ENCODE measurements at regions of chr6 and their contacts with region 1.

Region 1: DNA sequence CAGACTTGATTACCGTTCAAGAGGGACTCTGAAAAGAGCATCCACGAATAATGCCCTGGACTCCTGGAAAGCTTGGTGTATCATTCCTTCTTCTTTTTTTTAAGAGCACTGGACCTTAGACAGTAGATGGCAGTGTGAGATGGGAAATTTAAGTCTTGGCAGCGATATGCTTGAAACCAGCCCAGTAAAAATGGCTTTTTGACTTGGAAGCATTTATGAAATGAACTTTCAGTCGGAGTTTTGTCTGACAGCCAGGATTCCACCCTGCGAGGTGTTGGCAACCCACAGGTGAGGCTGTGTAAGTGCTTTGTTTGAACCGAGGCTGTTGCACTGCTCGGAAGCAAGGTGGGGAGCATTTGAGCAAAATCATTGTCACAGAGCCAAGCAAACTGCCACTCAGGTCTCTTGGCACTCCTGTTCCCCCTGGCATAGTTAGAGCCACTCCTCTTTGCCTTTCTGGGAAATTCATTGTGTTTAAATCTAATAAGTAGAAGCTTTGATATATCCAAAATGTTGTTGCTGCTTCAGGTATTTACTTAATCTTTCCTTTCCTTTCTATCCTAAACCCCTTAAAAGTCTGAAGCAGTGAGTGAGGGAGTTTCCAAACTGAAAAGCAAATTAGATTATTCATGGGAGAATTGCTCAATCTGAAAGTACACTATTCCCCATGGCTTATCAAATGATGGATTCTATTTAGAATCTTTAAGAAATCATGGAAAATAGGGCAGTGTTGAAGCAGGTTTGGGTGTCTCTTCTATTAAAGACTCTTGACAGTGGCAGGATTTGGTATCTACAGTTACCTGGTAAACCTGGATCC is 272.8 kb upstream of the SLC35B3 start:
- DNase-seq: peak; percentile 13
- H3K4me3 Mint-ChIP-seq: peak overlapping the region; percentile 21
- H3K27ac Mint-ChIP-seq: no peak overlapping the region
- H3K4me1 Mint-ChIP-seq: peaks cover 6% of the 10 kb centered on the region
- H3K27me3 Mint-ChIP-seq: no peaks in the 10 kb centered on the region
- CTCF ChIP-seq: no peak

Region 2: DNA sequence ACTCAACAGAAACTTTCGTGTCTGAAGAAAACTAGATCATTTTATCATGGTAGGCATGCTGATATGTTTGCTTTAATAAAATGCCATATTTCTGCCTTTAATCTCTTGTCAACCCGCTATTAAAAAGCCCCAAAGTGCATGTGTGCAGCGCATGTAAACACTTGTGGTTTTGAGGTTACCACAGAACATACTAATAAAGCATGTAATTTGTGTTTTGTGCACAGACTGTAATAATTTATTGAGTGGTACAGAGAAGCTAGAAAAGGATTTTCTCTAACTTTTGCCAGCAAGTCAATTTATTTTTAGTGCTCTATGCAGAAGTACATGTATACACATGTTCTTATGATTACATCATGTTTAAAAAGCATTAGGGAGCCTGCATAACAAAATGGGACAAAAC is 77.1 kb after region 1 on chr6:
- CTCF ChIA-PET with region 1: no interaction called
- intact Hi-C with region 1: no loop called
- DNase-seq: no peak
- H3K4me3 Mint-ChIP-seq: no peak overlapping the region
- H3K27ac Mint-ChIP-seq: no peak overlapping the region
- H3K4me1 Mint-ChIP-seq: no peaks in the 10 kb centered on the region
- H3K27me3 Mint-ChIP-seq: no peaks in the 10 kb centered on the region
- CTCF ChIP-seq: no peak

Region 3: DNA sequence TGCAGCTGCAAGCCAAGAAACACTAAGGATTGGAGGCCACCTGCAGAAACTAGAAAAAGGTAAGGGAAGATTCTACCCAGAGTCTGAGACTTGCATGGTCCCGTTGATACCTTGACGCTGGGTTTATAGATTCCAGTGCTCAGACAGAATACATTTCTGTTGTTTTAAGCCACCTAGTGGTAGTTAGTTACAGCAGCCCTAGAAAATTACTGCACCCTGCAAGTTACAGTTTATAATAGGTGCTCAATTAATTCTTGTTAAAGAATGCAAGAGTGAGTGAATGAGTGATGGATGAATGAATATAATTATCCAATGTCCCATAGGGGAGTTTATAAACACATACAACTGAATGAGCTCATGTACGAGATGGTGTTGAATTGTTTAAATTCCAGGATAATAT is 180.3 kb after region 1 on chr6:
- CTCF ChIA-PET with region 1: no interaction called
- intact Hi-C with region 1: loop called (anchors 5 kb)
- DNase-seq: no peak
- H3K4me3 Mint-ChIP-seq: no peak overlapping the region
- H3K27ac Mint-ChIP-seq: no peak overlapping the region
- H3K4me1 Mint-ChIP-seq: no peaks in the 10 kb centered on the region
- H3K27me3 Mint-ChIP-seq: no peaks in the 10 kb centered on the region
- CTCF ChIP-seq: no peak

Region 4: DNA sequence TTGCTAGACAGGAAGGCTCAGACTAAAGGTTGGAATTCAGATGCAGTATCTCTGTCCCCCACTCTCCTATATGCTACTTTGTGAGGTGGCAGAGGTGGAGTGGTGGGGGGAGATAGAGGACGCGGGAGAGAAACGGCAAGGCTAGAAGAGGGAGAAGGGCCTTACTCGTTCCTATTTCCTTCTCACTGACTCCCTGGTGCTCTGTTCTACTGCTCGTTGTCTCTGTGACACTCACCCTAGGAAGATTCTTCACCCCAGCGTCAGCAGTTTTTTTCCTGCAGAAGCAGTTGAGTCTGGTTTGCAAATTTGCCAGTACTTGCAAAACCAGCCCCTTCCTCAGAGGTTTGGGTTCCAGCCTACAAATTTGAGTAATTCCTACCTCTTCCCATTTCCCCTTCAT is 528.3 kb after region 1 on chr6:
- CTCF ChIA-PET with region 1: no interaction called
- intact Hi-C with region 1: no loop called
- DNase-seq: no peak
- H3K4me3 Mint-ChIP-seq: no peak overlapping the region
- H3K27ac Mint-ChIP-seq: no peak overlapping the region
- H3K4me1 Mint-ChIP-seq: no peaks in the 10 kb centered on the region
- H3K27me3 Mint-ChIP-seq: no peaks in the 10 kb centered on the region
- CTCF ChIP-seq: no peak

Measured in Calu3 (cell line).